ENCODE measurements at regions of chr10 and their contacts with region 1.

Region 1: GRCh38 chr10:68301790-68302502 is 29.9 kb upstream of the HNRNPH3 start:
- DNase-seq: peak; percentile 50

Region 2: GRCh38 chr10:68212721-68213352 is 89.1 kb before region 1 on chr10:
- CTCF ChIA-PET with region 1: interaction called, 24 read pairs
- POLR2A ChIA-PET with region 1: no interaction called
- DNase-seq: peak; percentile 33

Measured in HEK293T (cell line).